ENCODE measurements at regions of chr1 and their contacts with region 1.

Region 1: DNA sequence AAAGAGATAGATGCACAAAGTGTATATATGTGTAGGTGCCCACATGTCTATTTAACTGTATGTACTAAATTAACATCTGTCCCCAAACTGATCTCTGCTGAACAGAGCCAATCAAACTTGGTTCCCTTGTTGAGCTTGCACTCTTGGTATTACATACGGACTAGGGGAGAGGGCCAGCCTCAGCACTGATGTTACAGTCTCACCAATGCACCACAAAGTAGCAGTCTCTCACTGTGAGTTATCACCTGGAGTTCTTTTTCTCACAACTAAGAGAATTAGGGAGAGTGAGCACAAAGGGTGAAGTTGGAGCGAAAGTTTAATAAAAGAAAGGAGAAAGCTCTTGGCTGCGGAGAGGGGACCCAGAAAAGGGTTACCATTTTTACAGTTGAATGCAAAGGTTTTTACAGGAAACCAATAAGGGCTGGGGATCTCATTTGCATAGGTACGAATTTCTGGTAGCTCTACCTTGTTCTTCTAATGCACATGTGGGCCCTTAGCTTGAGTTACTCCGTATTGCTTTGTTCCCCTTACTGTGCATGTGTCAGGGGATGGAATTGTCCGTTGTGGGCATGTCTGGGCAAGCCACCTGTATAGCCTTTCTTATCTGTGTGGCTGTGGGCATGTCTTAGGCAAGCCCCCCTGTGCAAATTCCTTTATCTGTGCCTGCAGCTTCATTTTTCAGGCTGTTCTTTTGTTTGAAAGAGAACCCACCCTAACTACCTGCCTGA is 13.3 kb upstream of the CHI3L2 start:
- DNase-seq: peak; percentile 13
- ATAC-seq: no peak; the same call in 1 of the 2 replicates
- H3K4me3 ChIP-seq: no peak overlapping the region
- H3K27ac ChIP-seq: no peak overlapping the region; the same call in 1 of the 2 replicates
- H3K4me1 ChIP-seq: peaks cover 2% of the 10 kb centered on the region
- H3K27me3 ChIP-seq: no peaks in the 10 kb centered on the region; the same call in none of the 2 replicates
- CTCF ChIP-seq: no peak
- POLR2A ChIP-seq: no peak
- RAD21 ChIP-seq: no peak

Region 2: DNA sequence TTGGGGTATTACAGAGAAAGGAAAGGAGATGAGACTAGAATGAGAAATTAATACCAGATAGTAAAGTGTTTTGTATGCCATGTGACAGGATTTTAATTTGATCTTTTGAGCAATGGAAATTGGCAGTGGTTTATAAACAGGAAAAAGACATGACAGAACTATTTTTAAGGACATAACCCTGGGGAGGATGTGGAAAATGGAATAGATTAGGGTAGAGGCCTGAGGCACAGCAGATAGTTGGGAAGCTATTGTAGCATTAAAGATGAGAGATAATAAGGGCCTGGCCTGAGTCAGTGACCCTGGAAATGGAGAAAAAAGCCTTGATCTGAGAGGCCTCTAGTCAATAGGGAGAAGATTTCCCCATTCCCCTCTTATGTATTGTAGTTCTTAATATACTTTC is 517.4 kb before region 1 on chr1:
- CTCF ChIA-PET with region 1: no interaction called
- POLR2A ChIA-PET with region 1: no interaction called
- dilution Hi-C with region 1: no loop called
- in situ Hi-C with region 1: no loop called
- intact Hi-C with region 1: no loop called
- DNase-seq: no peak
- ATAC-seq: no peak
- H3K4me3 ChIP-seq: no peak overlapping the region
- H3K27ac ChIP-seq: no peak overlapping the region
- H3K4me1 ChIP-seq: no peaks in the 10 kb centered on the region
- H3K27me3 ChIP-seq: no peaks in the 10 kb centered on the region; the same call in 1 of the 2 replicates
- CTCF ChIP-seq: no peak
- POLR2A ChIP-seq: no peak
- RAD21 ChIP-seq: no peak

Region 3: DNA sequence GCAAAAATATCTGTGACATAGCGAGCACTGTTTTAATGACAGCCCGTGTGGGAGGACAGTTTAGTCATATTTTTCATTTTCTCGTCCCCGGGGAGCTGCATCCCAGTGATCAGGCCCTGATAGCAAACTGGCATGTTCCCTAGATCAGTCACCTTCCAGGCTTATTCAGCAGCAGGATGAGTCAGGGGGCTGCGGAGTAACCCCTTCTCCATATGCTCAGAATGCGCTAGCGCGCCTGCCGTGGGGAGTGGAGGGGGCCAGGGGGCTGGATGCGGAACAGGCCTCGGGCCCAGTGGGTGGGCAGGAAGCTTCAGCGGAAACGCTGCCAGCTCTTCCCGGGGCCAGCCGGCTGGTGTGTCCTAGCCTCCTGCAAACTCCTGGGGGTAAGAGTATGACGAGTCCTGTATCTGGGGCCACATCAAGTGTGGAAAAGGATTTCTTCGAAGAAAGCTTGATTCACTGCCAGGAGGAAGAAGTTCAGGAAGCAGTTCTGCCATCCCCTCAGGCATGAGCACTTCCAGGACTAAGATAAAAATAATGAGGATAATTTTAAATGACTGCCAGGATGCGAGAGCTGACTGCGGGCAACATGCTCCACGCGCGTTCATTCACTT is 681.3 kb after region 1 on chr1:
- CTCF ChIA-PET with region 1: no interaction called
- POLR2A ChIA-PET with region 1: interaction called, 13 read pairs
- dilution Hi-C with region 1: no loop called
- in situ Hi-C with region 1: no loop called
- intact Hi-C with region 1: no loop called
- DNase-seq: peak; percentile 3
- ATAC-seq: no peak
- H3K4me3 ChIP-seq: no peak overlapping the region
- H3K27ac ChIP-seq: no peak overlapping the region
- H3K4me1 ChIP-seq: no peaks in the 10 kb centered on the region
- H3K27me3 ChIP-seq: peaks cover 24% of the 10 kb centered on the region; the same call in 1 of the 2 replicates
- CTCF ChIP-seq: no peak
- POLR2A ChIP-seq: no peak
- RAD21 ChIP-seq: no peak